Ascending aorta (tissue), 2 donors: ENCODE measurements at regions of chr2 and their contacts with region 1.

Region 1: DNA sequence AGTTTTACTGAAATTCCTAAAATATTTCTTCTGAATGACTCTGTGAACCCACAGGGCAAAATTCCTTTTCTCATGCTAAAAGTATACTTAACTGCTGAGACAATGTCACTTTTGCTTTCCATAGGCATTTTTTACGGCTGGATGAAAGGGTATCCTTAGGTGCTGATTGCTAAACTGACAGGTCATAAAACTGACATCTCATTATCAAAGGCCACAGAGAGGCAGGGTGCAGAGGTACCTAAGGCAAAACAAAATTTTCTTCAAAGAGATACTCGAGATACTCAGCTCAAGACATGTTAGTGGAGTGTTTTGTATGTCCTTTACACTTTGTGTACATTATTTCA is 62.0 kb upstream of the WDR75 start:
- DNase-seq: no peak
- H3K4me3 ChIP-seq: peak overlapping the region in 1 of 2 donors; percentile 22
- H3K27ac ChIP-seq: peak overlapping the region in 1 of 2 donors; percentile 13
- H3K4me1 ChIP-seq: peaks cover 0 to 7% of the 10 kb centered on the region in 2 donors
- H3K27me3 ChIP-seq: no peaks in the 10 kb centered on the region
- CTCF ChIP-seq: no peak

Region 2: GRCh38 chr2:189559579-189560272 is 180.5 kb after region 1 on chr2:
- intact Hi-C with region 1: loop called (anchors 10 kb)
- DNase-seq: no peak
- H3K4me3 ChIP-seq: no peak overlapping the region
- H3K27ac ChIP-seq: peak overlapping the region; percentile 82 to 89
- H3K4me1 ChIP-seq: peaks cover 17 to 60% of the 10 kb centered on the region in 2 donors
- H3K27me3 ChIP-seq: no peaks in the 10 kb centered on the region
- CTCF ChIP-seq: no peak